Activated CD4-positive, alpha-beta T cell treated with anti-CD3 and anti-CD28 coated beads for 36 hours (primary cell): ENCODE measurements at regions of chr6 and their contacts with region 1.

Region 1: GRCh38 chr6:27503436-27504030 is 30.6 kb upstream of the ZNF184 start:
- DNase-seq: peak; percentile 87
- ATAC-seq: peak; percentile 40
- H3K4me3 Mint-ChIP-seq: peak overlapping the region; percentile 88
- H3K27ac Mint-ChIP-seq: peak overlapping the region; percentile 83
- H3K4me1 Mint-ChIP-seq: peaks cover 26% of the 10 kb centered on the region
- H3K27me3 Mint-ChIP-seq: peaks cover 4% of the 10 kb centered on the region

Region 2: DNA sequence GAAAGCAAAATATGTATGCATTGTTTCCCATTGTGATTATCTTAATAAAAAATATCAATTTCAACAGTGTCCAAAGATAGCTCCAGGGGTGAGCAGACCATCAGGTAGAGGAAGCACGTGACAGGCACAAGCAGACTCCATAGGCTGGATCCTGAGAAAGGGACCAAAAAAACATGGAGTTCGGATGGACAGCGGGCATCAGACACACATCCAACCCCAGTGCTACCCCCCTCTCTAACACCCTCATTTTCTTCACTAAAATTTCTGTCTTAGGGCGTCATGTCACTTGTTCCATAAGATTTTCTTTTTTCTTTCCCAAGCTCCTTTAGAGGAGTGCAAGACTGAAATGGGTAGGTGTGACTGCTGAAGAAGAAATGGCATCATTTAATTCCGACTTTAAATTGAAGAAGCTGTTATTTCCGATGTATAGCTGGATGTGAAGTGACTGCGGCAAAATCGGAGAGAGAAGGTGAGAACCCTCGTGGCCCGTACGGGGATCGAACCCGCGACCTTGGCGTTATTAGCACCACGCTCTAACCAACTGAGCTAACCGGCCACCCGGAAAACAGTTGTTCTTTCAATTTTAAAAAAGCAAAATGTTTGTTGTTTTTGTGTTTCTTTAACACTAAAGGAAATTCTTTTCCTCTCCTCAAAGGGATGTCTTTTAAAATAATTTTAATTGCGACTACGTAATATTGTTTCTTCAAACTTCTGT is 266.3 kb before region 1 on chr6:
- CTCF ChIA-PET with region 1: no interaction called
- POLR2A ChIA-PET with region 1: no interaction called
- intact Hi-C with region 1: loop called in 1 of 2 experiments (anchors 2 kb)
- DNase-seq: peak; percentile 83
- ATAC-seq: peak; percentile 60
- H3K4me3 Mint-ChIP-seq: peak overlapping the region; percentile 54
- H3K27ac Mint-ChIP-seq: no peak overlapping the region
- H3K4me1 Mint-ChIP-seq: peaks cover 24% of the 10 kb centered on the region
- H3K27me3 Mint-ChIP-seq: peaks cover 63% of the 10 kb centered on the region

Region 3: DNA sequence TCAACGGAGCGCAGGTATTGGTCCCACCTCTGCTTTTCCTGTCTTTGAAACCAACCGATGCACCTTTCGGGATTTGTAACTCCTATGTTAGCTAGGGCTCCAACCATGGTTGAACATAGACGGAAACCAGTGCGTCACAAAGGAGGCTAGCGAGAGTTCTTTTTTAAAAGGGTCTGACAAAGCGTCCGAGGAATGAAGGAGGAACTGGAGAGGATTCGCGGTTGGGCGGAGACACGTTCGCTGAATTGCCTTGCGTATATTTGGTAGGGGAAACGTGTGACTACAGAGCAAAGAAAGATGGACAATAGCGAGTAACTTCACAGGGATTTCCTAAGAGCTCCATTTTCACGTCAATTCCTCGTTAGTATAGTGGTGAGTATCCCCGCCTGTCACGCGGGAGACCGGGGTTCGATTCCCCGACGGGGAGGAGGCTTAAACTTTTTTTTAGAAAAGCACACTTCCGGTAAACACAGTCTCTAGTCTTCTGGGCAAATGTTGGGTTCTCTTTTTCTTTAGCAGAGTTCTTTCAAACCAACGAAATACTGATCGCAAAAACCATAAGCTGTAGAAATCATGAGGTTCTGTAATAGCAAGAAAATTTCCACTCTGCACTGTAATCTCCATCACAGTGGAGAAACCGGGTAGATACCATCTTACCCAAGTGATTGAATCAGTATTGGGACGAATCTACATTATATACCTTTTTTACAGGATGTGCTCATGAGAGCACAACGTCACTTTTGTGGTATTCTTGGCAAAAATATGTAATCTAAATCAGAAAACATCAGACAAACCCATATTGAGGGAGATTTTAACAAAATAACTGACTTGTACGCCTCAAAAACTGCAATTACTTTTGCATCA is 24.0 kb before region 1 on chr6:
- CTCF ChIA-PET with region 1: interaction called, 4 read pairs
- POLR2A ChIA-PET with region 1: interaction called, 3 read pairs
- intact Hi-C with region 1: loop called (anchors 1 kb)
- DNase-seq: peak; percentile 89
- ATAC-seq: peak; percentile 69
- H3K4me3 Mint-ChIP-seq: no peak overlapping the region
- H3K27ac Mint-ChIP-seq: no peak overlapping the region
- H3K4me1 Mint-ChIP-seq: peaks cover 6% of the 10 kb centered on the region
- H3K27me3 Mint-ChIP-seq: no peaks in the 10 kb centered on the region

Region 4: GRCh38 chr6:27795697-27796494 is 292.4 kb after region 1 on chr6:
- CTCF ChIA-PET with region 1: no interaction called
- POLR2A ChIA-PET with region 1: no interaction called
- intact Hi-C with region 1: loop called in 1 of 2 experiments (anchors 5 kb)
- DNase-seq: peak; percentile 59
- ATAC-seq: peak; percentile 55
- H3K4me3 Mint-ChIP-seq: no peak overlapping the region
- H3K27ac Mint-ChIP-seq: peak overlapping the region; percentile 13
- H3K4me1 Mint-ChIP-seq: peaks cover 26% of the 10 kb centered on the region
- H3K27me3 Mint-ChIP-seq: peaks cover 6% of the 10 kb centered on the region